WTC11 (cell line): ENCODE measurements at regions of chr6 and their contacts with region 1.

Region 1: DNA sequence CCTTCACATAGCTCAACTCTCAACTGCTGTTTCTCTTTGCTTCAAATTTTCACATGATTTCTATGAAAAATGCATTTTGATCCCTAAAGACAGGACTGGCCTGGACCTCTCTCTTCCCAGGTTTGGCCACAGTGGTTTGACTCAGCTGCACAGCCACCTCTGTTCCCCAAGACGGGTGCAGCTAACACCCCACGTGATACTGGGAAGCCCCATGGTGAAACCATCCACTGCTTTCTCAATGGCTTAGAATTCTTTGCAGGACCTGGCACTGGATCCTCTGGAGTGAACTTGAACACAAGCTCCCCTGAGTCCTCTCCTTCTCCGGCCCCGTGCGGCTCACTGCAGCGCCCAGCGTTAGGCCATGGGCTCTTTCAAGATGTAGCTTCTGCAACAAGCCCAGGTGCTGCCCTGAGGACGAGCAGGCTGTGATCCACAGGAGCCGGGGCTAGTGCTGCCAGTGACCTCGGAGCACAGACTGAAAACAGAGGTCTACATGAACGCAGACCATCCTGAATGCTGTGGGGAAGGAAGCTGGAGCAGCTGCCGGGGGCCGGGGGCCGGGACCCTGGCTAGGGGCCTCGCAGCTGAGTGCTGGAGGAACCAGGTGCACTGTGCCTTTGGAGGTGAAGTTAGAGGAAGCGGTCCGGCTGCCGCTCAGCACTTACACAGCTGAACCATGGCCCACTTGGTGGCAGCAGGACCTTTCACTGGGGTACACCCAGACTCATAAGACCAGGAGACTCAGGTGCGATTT is 58.8 kb upstream of the MPC1 start:
- DNase-seq: no peak
- ATAC-seq: no peak
- H3K4me3 Mint-ChIP-seq: no peak overlapping the region
- H3K27ac Mint-ChIP-seq: 0 out of 2 replicates have a peak overlapping the region, but pooled peaks have one; percentile 32
- H3K4me1 Mint-ChIP-seq: no peaks in the 10 kb centered on the region
- H3K27me3 Mint-ChIP-seq: no peaks in the 10 kb centered on the region
- CTCF ChIP-seq: no peak

Region 2: GRCh38 chr6:166456395-166457156 is 15.1 kb after region 1 on chr6:
- CTCF ChIA-PET with region 1: interaction called, 13 read pairs
- POLR2A ChIA-PET with region 1: no interaction called
- DNase-seq: no peak
- ATAC-seq: peak; percentile 78
- H3K4me3 Mint-ChIP-seq: no peak overlapping the region
- H3K27ac Mint-ChIP-seq: 0 out of 2 replicates have a peak overlapping the region, but pooled peaks have one; percentile 61
- H3K4me1 Mint-ChIP-seq: peaks cover 4% of the 10 kb centered on the region; the same call in 1 of the 2 replicates
- H3K27me3 Mint-ChIP-seq: no peaks in the 10 kb centered on the region
- CTCF ChIP-seq: no peak